Transverse colon (tissue), 4 donors: ENCODE measurements at regions of chr6 and their contacts with region 1.

Region 1: GRCh38 chr6:89022798-89023197 is 57.8 kb upstream of the PNRC1 start:
- DNase-seq: no peak
- H3K4me3 ChIP-seq: no peak overlapping the region
- H3K27ac ChIP-seq: peak overlapping the region; percentile 74 to 79 (median 78)
- H3K4me1 ChIP-seq: peaks cover 9 to 32% (median 20%) of the 10 kb centered on the region in 4 donors
- H3K27me3 ChIP-seq: no peaks in the 10 kb centered on the region
- CTCF ChIP-seq: no peak
- EP300 ChIP-seq: peak; percentile 80
- POLR2A ChIP-seq: no peak

Region 2: GRCh38 chr6:88780714-88781389 is 241.9 kb before region 1 on chr6:
- in situ Hi-C with region 1: no loop called
- intact Hi-C with region 1: no loop called
- DNase-seq: peak; percentile 37
- H3K4me3 ChIP-seq: no peak overlapping the region
- H3K27ac ChIP-seq: no peak overlapping the region
- H3K4me1 ChIP-seq: no peaks in the 10 kb centered on the region
- H3K27me3 ChIP-seq: no peaks in the 10 kb centered on the region
- CTCF ChIP-seq: peak; percentile 57 to 85 (median 81)
- EP300 ChIP-seq: no peak
- POLR2A ChIP-seq: no peak

Region 3: DNA sequence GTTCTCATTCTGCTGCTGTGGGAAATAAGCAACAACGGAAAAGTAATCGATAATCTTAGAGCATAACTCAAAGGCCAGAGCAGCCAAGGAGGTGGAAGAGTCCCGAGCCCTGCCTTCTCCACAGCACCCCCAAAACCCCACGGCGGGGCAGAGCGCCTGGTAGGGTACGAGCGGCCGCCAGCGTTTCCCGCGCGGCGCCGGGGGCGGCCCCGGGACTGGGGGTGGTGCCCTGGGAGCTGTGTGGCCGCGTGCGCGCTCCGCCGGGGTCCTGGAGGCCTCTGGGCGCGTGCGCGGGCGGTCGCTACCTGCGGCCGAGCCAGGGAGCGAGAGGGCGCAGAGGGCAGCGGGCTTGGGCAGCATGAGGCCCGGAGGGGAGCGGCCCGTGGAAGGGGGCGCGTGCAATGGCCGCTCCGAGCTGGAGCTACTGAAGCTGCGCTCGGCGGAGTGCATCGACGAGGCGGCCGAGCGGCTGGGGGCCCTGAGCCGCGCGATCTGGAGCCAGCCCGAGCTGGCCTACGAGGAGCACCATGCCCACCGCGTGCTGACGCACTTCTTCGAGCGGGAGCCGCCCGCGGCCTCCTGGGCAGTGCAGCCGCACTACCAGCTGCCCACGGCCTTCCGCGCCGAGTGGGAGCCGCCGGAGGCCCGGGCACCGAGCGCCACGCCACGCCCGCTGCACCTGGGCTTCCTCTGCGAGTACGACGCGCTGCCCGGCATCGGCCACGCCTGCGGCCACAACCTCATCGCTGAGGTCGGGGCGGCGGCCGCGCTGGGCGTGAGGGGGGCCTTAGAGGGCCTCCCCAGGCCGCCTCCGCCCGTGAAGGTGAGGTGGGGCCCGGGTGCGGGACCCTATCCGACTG is 123.2 kb after region 1 on chr6 and contains the start of gene PM20D2:
- in situ Hi-C with region 1: no loop called
- intact Hi-C with region 1: loop called (anchors 2 kb)
- DNase-seq: peak; percentile 77
- H3K4me3 ChIP-seq: peak within 1 kb of the TSS; percentile 76 to 84 (median 78)
- H3K27ac ChIP-seq: peak within 1 kb of the TSS; percentile 90 to 95 (median 94)
- H3K4me1 ChIP-seq: peaks cover 0 to 24% (median 10%) of the 10 kb centered on the region in 4 donors
- H3K27me3 ChIP-seq: no peaks in the 10 kb centered on the region
- CTCF ChIP-seq: no peak
- EP300 ChIP-seq: no peak
- POLR2A ChIP-seq: peak; percentile 51
- total RNA-seq, gene PM20D2: 3.7 to 16.4 (median 12.4) TPM